ENCODE measurements at regions of chr14 and their contacts with region 1.

Region 1: DNA sequence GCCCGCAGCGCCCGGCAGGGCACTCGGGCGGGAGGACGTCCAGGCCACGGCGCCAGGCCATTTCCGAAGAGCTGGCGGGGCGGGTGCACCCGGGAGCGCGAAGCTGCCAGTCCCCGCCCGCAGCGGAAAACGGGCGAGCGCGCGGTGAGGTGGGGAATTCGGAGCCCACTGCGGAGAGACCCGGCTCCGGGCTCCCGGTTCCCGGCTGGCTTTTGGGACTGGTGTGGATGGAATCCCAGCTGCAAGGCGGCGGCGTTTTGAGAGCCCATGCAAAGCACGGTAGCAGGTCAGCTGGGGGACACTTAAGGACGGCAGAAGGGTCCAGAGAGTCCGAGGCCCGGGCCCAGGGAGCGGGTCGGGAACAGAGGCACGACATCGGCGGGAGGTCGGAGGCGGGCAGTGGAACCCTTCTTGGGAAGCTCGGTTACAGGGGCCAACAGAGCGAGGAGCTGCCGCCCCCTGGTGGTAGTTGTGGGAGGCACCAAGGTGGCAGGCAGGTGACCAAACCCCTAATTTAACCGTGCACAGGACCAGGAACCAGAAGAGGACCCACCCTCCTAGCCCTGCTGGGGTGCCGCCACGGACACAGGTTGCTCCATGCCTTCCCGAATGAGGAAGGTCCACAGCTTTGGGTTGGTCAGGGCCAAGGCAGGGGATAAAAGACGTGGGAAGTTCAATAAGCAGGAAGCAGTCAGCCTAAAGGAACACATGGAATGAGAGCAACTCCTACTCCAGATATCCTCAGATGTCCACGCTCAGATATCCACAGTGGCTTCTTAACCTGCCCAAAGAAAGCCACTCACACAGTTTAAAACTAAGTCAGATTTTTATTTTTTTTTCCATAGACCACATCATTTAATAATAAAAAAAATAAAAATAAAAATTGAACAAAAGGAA is 685 bp upstream of the CDH24 start:
- DNase-seq: peak; percentile 92
- H3K4me3 ChIP-seq: peak overlapping the region; percentile 62 to 82
- H3K27ac ChIP-seq: peak overlapping the region; percentile 62 to 90; a peak in 3 of 4 replicates
- H3K4me1 ChIP-seq: peaks cover 27 to 28% of the 10 kb centered on the region in 2 experiments; a peak in 3 of 4 replicates
- H3K27me3 ChIP-seq: no peaks in the 10 kb centered on the region
- CTCF ChIP-seq: peak; percentile 94
- EP300 ChIP-seq: no peak
- RAD21 ChIP-seq: peak; percentile 81

Region 2: DNA sequence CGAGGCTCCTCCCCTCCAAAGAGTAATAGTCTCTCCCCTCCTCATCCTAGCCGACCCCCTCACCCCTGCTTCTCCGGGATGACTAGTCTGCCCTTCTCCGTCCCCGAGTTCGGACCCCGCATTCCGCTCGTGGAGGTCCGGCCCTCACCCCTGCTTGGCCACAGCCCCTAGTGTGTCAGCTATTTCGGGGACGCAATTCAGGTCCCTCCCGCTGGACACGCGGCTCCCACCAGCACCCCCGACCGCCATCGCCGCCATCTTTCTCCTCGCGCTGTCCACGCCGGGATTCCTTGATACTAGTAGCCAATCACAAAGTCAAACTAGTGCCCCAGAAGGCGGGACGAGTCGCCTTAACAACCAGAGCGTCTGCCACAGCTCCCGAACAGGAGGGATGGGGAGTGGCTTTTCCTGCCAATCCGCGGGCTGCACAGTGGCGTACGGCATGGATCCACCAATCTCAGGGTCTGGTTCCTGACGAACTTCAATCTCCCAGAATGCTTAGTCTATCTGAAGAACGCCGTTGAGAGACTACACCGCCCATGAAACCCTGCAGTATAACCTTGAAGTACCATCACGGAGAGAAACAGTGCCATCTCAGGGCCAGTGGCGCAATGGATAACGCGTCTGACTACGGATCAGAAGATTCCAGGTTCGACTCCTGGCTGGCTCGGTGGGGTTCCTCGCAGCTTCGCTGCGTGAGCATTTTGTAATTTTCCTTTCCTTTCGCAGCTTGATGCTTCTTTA is 128.7 kb before region 1 on chr14 and contains the start of gene PRMT5:
- CTCF ChIA-PET with region 1: interaction called, 18 read pairs
- POLR2A ChIA-PET with region 1: no interaction called
- DNase-seq: peak; percentile 91
- H3K4me3 ChIP-seq: peak within 1 kb of the TSS; percentile 83 to 84
- H3K27ac ChIP-seq: peak within 1 kb of the TSS; percentile 85 to 89
- H3K4me1 ChIP-seq: peaks cover 9 to 12% of the 10 kb centered on the region in 2 experiments; a peak in 2 of 4 replicates
- H3K27me3 ChIP-seq: no peaks in the 10 kb centered on the region
- CTCF ChIP-seq: no peak
- EP300 ChIP-seq: peak in 1 of 2 experiments; percentile 70; a peak in 1 of 4 replicates
- RAD21 ChIP-seq: no peak
- polyA plus RNA-seq, gene PRMT5: 132 and 174 TPM in 2 replicates

Region 3: GRCh38 chr14:22986508-22987054 is 71.4 kb before region 1 on chr14:
- CTCF ChIA-PET with region 1: interaction called, 1,566 read pairs
- POLR2A ChIA-PET with region 1: interaction called, 27 read pairs
- DNase-seq: peak; percentile 79
- H3K4me3 ChIP-seq: no peak overlapping the region; a peak in 1 of 4 replicates
- H3K27ac ChIP-seq: no peak overlapping the region
- H3K4me1 ChIP-seq: peaks cover 0 to 4% of the 10 kb centered on the region in 2 experiments; a peak in 1 of 4 replicates
- H3K27me3 ChIP-seq: no peaks in the 10 kb centered on the region
- CTCF ChIP-seq: peak; percentile 91
- EP300 ChIP-seq: no peak
- RAD21 ChIP-seq: peak; percentile 97

Region 4: GRCh38 chr14:23006544-23007419 is 51.2 kb before region 1 on chr14:
- CTCF ChIA-PET with region 1: interaction called, 1,566 read pairs
- POLR2A ChIA-PET with region 1: interaction called, 33 read pairs
- DNase-seq: peak; percentile 97
- H3K4me3 ChIP-seq: peak overlapping the region; percentile 67 to 68
- H3K27ac ChIP-seq: peak overlapping the region; percentile 81 to 98
- H3K4me1 ChIP-seq: peaks cover 10 to 18% of the 10 kb centered on the region in 2 experiments
- H3K27me3 ChIP-seq: no peaks in the 10 kb centered on the region
- CTCF ChIP-seq: peak; percentile 32
- EP300 ChIP-seq: no peak
- RAD21 ChIP-seq: no peak

Region 5: DNA sequence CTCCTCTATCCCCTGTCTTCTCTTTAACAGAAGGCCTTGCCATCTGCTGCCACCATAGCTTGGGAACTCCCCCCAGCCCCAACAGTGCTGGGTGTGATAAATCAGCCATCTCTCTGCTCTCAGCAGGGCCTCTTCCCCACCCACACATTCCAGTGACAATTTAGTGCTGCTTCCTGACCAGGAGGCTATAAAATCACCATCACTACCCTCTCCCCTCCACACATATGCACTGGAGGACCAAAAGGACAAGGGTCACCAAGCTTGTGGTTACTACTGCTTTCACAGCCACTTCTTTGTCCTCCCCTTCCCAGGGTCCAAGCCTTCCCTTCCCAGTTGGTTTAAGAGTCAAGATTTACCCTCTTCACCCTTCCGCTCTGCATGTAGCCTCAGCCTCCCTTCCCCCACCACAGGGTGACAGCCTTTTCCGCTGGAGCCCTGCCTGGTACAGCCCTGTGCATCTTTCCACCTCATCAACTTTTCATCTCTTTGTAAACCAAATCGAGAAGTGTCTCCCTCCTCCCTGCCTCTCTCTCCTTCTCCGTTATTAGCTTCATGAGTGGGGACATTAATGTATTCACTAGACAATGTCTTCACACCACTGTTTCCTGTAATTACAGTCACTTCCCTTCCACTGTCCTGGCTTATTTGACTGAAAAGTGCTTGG is 32.7 kb before region 1 on chr14:
- CTCF ChIA-PET with region 1: interaction called, 18 read pairs
- POLR2A ChIA-PET with region 1: no interaction called
- DNase-seq: no peak
- H3K4me3 ChIP-seq: no peak overlapping the region
- H3K27ac ChIP-seq: no peak overlapping the region
- H3K4me1 ChIP-seq: peaks cover 4 to 12% of the 10 kb centered on the region in 2 experiments; a peak in 2 of 4 replicates
- H3K27me3 ChIP-seq: no peaks in the 10 kb centered on the region
- CTCF ChIP-seq: no peak
- EP300 ChIP-seq: no peak
- RAD21 ChIP-seq: no peak

Region 6: DNA sequence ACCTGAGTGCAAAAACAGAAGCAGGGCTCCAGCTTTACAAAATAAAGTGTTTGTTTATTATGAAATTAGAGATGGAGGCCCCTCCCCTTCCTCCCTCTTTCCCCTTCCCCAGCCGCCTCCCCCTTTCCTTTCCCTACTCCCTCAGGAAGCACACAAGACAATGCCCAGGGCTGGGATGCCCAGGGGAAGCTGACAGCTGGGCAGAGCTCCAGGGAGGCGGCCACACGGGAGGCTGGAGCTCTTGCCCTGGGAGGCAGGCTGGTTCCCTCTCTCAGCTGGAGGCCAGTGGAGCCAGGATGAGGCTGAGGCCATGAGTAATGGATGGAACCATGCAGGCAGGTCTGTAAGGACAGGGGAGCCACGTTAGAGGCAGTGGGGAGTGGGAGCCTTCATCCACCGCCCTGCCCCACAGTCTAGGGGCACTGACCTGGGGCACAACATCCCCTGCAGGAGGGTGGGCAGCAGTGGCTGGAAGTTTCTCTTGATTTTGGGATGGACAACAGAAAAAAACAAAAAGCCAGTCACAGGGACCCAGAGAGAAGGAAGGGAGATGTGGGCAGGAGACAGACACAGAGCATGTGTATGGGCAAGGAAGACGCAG is 10.9 kb before region 1 on chr14:
- CTCF ChIA-PET with region 1: interaction called, 20 read pairs
- POLR2A ChIA-PET with region 1: interaction called, 3 read pairs
- DNase-seq: no peak
- H3K4me3 ChIP-seq: no peak overlapping the region
- H3K27ac ChIP-seq: no peak overlapping the region
- H3K4me1 ChIP-seq: peaks cover 0 to 11% of the 10 kb centered on the region in 2 experiments; a peak in 1 of 4 replicates
- H3K27me3 ChIP-seq: no peaks in the 10 kb centered on the region
- CTCF ChIP-seq: no peak
- EP300 ChIP-seq: no peak
- RAD21 ChIP-seq: no peak

Region 7: DNA sequence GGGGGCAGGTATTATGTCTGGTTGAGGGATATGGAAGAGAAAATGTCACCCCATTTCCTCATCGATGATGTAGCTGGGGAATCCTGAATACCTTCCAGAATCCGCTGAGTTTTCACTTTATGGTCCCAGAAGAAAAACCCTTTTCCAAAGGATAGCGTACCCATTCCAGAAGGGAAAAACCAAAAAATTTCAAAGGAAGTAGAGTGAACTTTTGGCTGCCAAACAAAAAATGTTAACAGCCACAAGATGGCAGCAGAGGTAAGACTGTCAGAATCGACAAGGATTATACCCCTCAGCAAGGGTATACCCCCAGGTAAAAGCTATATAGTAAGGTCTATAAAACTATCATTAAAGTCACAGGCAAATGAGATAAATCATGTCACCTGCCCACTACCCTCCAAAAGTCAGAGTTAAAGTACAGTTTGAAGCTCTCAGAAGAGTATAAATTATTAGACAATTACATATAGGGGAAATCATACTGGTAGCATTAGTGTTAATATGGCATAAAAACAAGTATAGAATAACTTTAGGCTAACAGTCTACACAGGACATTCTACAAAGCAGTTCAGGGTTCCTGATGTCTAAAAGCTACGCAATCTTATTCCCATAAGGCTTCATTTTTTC is 18.9 kb after region 1 on chr14:
- CTCF ChIA-PET with region 1: interaction called, 152 read pairs
- POLR2A ChIA-PET with region 1: interaction called, 5 read pairs
- DNase-seq: peak; percentile 48
- H3K4me3 ChIP-seq: no peak overlapping the region
- H3K27ac ChIP-seq: 0 out of 4 replicates have a peak overlapping the region, but pooled peaks of 1 of the 2 experiments have one; percentile 75
- H3K4me1 ChIP-seq: peaks cover 6 to 30% of the 10 kb centered on the region in 2 experiments
- H3K27me3 ChIP-seq: no peaks in the 10 kb centered on the region
- CTCF ChIP-seq: peak; percentile 80
- EP300 ChIP-seq: no peak
- RAD21 ChIP-seq: peak; percentile 41